HepG2 (cell line): ENCODE measurements at regions of chr3 and their contacts with region 1.

Region 1: DNA sequence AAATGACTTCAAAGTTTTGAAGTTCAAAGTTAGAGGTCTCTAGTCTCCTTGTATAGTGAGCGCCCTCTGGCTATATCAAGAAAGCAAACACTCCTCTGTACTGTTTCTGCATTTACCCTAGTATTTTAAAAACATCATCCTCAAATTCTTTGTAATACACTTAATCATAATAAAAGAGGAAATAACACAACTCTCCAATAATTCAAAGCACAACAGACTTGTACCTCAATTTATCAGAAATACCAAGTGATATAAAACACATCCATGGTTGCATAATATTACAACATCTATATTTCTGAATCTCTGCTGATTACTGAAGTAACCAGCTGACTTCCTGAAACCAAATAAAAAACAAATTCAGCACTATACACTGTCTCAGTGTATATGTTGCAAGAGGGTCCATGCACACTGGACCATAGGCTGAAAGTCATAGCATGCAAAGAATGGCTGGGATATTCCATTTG is 12.5 kb downstream of the PLOD2 start:
- DNase-seq: no peak
- ATAC-seq: peak; percentile 50
- H3K4me3 ChIP-seq: no peak overlapping the region
- H3K27ac ChIP-seq: peak overlapping the region; percentile 27
- H3K4me1 ChIP-seq: peaks cover 72% of the 10 kb centered on the region
- H3K27me3 ChIP-seq: no peaks in the 10 kb centered on the region
- CTCF ChIP-seq: peak; percentile 24; the same call in 1 of the 2 replicates
- EP300 ChIP-seq: 0 out of 4 replicates have a peak, but pooled peaks of 1 of the 2 experiments have one; percentile 18
- POLR2A ChIP-seq: no peak
- RAD21 ChIP-seq: no peak

Region 2: DNA sequence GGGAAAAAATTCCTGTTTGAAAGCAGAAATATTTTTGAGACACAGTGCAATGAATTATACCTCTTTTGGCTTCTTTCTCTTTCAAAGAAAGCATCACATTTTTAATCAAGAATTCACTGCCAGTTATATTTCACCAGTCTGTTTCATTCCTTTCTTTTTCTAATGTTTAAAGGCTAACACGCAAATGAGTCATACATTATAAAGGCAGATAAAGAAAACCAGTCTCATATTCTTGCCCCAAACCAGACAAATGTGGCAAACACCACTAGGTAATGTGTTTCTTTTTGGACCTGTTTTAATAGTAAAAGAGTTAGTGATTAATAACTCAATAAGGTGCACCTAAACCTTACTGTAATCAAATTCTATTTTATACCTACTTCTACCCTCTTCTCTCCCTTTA is 71.3 kb before region 1 on chr3:
- CTCF ChIA-PET with region 1: no interaction called
- POLR2A ChIA-PET with region 1: no interaction called
- in situ Hi-C with region 1: no loop called
- intact Hi-C with region 1: loop called (anchors 5 kb)
- DNase-seq: no peak
- ATAC-seq: no peak
- H3K4me3 ChIP-seq: no peak overlapping the region
- H3K27ac ChIP-seq: no peak overlapping the region
- H3K4me1 ChIP-seq: no peaks in the 10 kb centered on the region
- H3K27me3 ChIP-seq: no peaks in the 10 kb centered on the region
- CTCF ChIP-seq: no peak
- EP300 ChIP-seq: no peak
- POLR2A ChIP-seq: no peak
- RAD21 ChIP-seq: no peak